Pancreas (tissue), 10 donors: ENCODE measurements at regions of chr20 and their contacts with region 1.

Region 1: DNA sequence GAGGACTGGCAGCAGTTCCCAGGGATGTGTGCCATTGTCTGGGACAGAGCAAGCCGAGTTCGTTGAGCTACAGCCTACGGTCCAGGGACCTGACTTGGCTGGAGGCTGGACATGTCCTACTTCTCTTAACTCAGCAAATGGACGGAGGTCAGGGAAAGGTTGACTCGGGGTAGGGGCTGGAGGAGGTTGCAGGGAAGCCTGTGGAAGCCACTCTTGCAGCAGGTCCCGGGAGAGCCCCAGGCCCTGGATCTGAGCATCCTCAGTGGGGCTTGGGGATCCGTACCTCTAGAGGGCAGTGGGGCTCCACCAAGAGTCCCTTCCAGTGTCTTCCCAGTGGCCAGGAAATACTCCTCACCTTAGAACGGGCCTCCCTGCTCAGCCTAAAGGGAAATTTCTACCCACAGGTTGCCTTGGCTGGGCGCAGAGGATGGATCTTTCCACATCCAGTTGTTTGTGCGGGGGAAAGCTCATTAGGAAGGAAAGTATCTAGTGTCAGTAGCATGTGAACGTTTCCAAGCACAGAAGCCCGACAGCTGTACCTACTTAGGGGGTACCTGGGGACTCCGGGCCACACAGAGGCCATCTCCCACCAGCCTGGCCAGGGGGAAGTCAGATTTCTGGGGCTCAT is 170.2 kb downstream of the NFATC2 start:
- DNase-seq: peak; percentile 61 to 86 (median 71)
- ATAC-seq: peak; percentile 92 to 97 (median 96)
- H3K4me3 ChIP-seq: no peak overlapping the region
- H3K27ac ChIP-seq: no peak overlapping the region
- H3K4me1 ChIP-seq: peaks cover 0 to 8% (median 0%) of the 10 kb centered on the region in 3 donors
- H3K27me3 ChIP-seq: no peaks in the 10 kb centered on the region
- CTCF ChIP-seq: peak; percentile 26 to 83 (median 80)

Region 2: GRCh38 chr20:51595058-51595532 is 222.8 kb after region 1 on chr20:
- intact Hi-C with region 1: loop called (anchors 5 to 10 kb)
- DNase-seq: peak; percentile 70 to 92 (median 84)
- ATAC-seq: peak; percentile 94 to 100 (median 99)
- H3K4me3 ChIP-seq: no peak overlapping the region
- H3K27ac ChIP-seq: no peak overlapping the region
- H3K4me1 ChIP-seq: no peaks in the 10 kb centered on the region
- H3K27me3 ChIP-seq: no peaks in the 10 kb centered on the region
- CTCF ChIP-seq: peak; percentile 46 to 77 (median 66)

Region 3: DNA sequence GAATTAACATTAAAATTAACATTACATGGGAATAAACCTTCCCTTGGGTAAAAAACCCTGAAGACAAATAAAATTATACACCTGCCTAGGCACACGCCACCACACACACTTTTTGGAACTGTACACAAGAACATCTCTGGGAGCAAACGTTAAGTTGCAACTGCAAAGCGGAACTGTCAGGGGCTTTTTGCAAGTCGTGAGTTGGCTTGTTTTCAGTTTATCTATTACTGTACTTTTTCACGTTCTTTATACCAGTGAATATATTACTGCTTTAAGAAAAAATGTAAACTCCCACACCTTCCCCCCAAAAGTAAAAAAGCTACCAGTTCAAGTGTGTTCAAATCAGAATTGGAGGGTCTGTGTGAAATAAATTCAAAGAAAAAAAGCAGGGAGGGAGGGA is 235.8 kb after region 1 on chr20:
- intact Hi-C with region 1: no loop called
- DNase-seq: no peak
- ATAC-seq: no peak
- H3K4me3 ChIP-seq: no peak overlapping the region
- H3K27ac ChIP-seq: no peak overlapping the region
- H3K4me1 ChIP-seq: no peaks in the 10 kb centered on the region
- H3K27me3 ChIP-seq: no peaks in the 10 kb centered on the region
- CTCF ChIP-seq: no peak

Region 4: DNA sequence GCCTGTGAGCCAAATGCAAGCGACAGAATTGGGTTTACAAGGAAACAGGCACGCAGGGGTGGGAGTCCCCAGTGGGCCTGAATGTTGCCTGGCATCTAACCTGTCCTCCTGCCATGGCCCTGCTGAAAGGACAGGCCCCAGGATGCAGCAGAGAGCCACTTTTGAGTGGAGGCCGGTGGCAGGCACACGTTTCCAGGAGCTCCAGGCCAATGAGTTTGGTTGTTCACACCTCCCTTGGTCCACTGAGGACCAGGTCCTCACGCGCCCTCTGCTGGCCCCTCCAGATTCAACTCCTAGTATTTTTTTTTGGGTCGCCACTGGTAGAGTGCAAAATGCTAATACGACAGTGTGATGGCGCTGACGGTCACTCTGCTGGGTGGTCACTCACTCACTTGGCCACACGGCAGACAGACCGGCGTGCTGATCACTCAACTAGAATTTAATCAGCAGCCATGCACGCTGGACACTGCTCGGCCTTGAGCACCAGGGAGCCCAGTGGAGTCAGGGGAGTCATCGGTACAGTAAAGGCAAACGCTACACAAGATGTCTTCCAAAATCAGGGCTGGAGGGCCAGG is 252.0 kb after region 1 on chr20:
- intact Hi-C with region 1: loop called in 1 of 3 experiments (anchors 10 kb)
- DNase-seq: peak in 3 of 6 donors; percentile 47 to 68 (median 50)
- ATAC-seq: peak; percentile 48 to 83 (median 77)
- H3K4me3 ChIP-seq: no peak overlapping the region
- H3K27ac ChIP-seq: no peak overlapping the region
- H3K4me1 ChIP-seq: no peaks in the 10 kb centered on the region
- H3K27me3 ChIP-seq: no peaks in the 10 kb centered on the region
- CTCF ChIP-seq: peak; percentile 22 to 46 (median 38)

Region 5: GRCh38 chr20:51758978-51759544 is 386.8 kb after region 1 on chr20:
- intact Hi-C with region 1: no loop called
- DNase-seq: peak in 1 of 6 donors; percentile 41
- ATAC-seq: peak in 3 of 4 donors; percentile 12 to 40 (median 39)
- H3K4me3 ChIP-seq: no peak overlapping the region
- H3K27ac ChIP-seq: peak overlapping the region in 2 of 4 donors; percentile 11 to 77
- H3K4me1 ChIP-seq: no peaks in the 10 kb centered on the region
- H3K27me3 ChIP-seq: no peaks in the 10 kb centered on the region
- CTCF ChIP-seq: no peak